Prostate gland (tissue), 2 donors: ENCODE measurements at regions of chr6 and their contacts with region 1.

Region 1: GRCh38 chr6:27893059-27893835 is 18.9 kb downstream of the OR2B2 start:
- DNase-seq: peak; percentile 89
- H3K4me3 ChIP-seq: peak overlapping the region; percentile 46 to 47
- H3K27ac ChIP-seq: peak overlapping the region; percentile 72 to 80
- H3K4me1 ChIP-seq: no peaks in the 10 kb centered on the region
- H3K27me3 ChIP-seq: no peaks in the 10 kb centered on the region
- CTCF ChIP-seq: peak in 1 of 4 experiments; percentile 7
- POLR2A ChIP-seq: peak; percentile 90

Region 2: DNA sequence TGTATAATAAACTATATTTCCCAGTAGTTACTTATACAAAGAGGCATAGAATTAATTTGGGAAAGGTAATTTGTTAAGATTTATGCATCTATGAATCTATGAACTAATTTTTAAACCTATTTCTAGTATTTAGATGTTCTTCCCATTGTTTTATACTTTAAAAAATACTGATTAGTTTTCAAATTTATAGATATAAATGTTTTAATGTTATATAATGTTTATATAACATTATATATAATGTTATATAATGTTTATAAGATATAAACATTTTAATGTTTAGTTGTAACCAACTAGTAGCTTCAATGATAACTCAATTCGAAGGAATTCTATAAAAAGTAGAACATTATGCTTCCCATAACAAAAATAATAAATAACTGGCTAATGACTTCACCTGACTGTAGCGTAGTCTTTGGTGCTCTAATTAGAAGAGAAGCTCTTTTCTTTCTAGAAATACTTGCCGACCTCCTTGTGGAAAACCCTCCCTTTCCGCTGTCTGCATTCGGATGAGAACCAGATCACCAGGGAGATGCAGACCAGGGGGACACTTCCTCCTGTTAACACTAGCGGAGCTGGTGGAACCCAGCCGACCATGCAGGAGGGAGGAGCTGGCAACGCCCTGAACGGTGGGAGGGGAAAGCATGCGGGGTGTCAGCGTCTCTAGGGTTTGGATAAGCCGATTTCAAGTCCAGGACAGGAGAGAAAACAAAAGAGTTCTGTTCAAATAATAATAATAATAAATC is 139.4 kb before region 1 on chr6:
- intact Hi-C with region 1: loop called (anchors 2 kb)
- DNase-seq: peak; percentile 26
- H3K4me3 ChIP-seq: peak overlapping the region; percentile 18 to 19
- H3K27ac ChIP-seq: no peak overlapping the region
- H3K4me1 ChIP-seq: no peaks in the 10 kb centered on the region
- H3K27me3 ChIP-seq: no peaks in the 10 kb centered on the region
- CTCF ChIP-seq: no peak
- POLR2A ChIP-seq: no peak

Region 3: GRCh38 chr6:27772261-27773001 is 120.8 kb before region 1 on chr6:
- intact Hi-C with region 1: loop called (anchors 5 kb)
- DNase-seq: peak; percentile 81
- H3K4me3 ChIP-seq: no peak overlapping the region
- H3K27ac ChIP-seq: no peak overlapping the region
- H3K4me1 ChIP-seq: no peaks in the 10 kb centered on the region
- H3K27me3 ChIP-seq: no peaks in the 10 kb centered on the region
- CTCF ChIP-seq: peak; percentile 50 to 87 (median 80)
- POLR2A ChIP-seq: no peak

Region 4: DNA sequence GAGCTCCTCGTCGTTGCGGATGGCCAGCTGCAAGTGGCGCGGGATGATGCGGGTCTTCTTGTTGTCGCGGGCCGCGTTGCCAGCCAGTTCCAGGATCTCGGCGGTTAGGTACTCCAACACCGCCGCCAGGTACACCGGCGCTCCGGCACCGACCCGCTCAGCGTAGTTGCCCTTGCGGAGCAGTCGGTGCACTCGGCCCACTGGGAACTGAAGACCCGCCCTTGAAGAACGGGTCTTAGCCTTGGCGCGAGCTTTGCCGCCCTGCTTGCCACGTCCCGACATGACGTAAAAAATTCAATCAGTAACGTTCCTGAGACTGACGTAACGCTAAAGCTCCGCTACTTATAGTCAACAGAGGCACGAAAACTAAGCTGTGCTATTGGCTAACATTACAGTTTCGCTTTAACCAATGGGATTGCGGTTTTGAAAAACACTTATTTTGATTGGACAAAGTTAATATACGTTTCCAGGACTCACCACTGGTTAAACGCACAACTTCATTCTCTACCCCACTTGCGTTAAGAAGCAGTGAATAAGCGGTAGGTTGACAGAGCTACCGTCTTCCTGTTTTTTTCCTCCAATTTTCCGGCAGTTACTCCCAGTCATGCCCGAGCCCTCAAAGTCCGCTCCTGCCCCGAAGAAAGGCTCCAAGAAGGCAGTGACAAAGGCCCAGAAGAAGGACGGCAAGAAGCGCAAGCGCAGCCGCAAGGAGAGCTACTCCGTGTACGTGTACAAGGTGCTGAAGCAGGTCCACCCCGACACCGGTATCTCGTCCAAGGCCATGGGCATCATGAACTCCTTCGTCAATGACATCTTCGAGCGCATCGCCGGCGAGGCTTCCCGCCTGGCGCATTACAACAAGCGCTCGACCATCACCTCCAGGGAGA is 54.9 kb before region 1 on chr6:
- intact Hi-C with region 1: loop called (anchors 2 kb)
- DNase-seq: peak; percentile 91
- H3K4me3 ChIP-seq: peak overlapping the region; percentile 57 to 69
- H3K27ac ChIP-seq: peak overlapping the region; percentile 94 to 97
- H3K4me1 ChIP-seq: peaks cover 13% of the 10 kb centered on the region
- H3K27me3 ChIP-seq: no peaks in the 10 kb centered on the region
- CTCF ChIP-seq: peak in 2 of 4 experiments; percentile 24 to 78
- POLR2A ChIP-seq: peak; percentile 90